ENCODE measurements at regions of chr15 and their contacts with region 1.

Region 1: DNA sequence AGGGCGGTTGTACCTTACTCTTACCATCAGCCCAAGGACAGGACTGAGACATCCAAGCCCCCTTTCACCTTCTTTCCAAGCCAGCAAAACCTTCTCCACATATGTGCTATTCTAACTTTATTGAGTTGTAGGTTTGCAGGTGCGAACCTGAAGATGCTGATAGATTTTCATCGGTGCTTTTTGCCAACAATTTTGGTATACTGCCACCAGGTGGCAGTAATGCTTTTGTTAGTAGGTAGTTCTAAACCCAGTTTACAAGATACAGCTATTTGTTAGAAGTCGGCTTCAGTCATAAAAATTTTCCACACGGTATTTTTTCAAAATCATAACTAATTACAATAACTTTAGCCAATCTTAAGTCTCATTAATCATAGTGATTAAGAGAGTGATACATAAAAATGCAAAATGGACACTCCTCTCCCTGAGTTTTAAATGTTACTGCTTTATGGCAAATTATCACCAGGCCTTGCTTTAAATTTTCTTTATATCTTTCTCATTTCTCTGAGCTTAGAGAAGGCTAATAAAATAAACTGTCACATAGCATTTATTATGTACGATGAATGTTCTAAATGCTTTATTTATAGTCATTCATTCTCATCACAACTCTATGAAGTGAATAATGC is 636 bp downstream of the TBC1D21 start:
- DNase-seq: peak; percentile 56
- H3K4me3 Mint-ChIP-seq: no peak overlapping the region
- H3K27ac Mint-ChIP-seq: no peak overlapping the region
- H3K4me1 Mint-ChIP-seq: no peaks in the 10 kb centered on the region
- H3K27me3 Mint-ChIP-seq: peaks cover 57% of the 10 kb centered on the region

Region 2: GRCh38 chr15:73891328-73892315 is 17.6 kb after region 1 on chr15:
- CTCF ChIA-PET with region 1: interaction called, 14 read pairs
- DNase-seq: no peak
- H3K4me3 Mint-ChIP-seq: no peak overlapping the region
- H3K27ac Mint-ChIP-seq: no peak overlapping the region
- H3K4me1 Mint-ChIP-seq: no peaks in the 10 kb centered on the region
- H3K27me3 Mint-ChIP-seq: peaks cover 47% of the 10 kb centered on the region

Region 3: DNA sequence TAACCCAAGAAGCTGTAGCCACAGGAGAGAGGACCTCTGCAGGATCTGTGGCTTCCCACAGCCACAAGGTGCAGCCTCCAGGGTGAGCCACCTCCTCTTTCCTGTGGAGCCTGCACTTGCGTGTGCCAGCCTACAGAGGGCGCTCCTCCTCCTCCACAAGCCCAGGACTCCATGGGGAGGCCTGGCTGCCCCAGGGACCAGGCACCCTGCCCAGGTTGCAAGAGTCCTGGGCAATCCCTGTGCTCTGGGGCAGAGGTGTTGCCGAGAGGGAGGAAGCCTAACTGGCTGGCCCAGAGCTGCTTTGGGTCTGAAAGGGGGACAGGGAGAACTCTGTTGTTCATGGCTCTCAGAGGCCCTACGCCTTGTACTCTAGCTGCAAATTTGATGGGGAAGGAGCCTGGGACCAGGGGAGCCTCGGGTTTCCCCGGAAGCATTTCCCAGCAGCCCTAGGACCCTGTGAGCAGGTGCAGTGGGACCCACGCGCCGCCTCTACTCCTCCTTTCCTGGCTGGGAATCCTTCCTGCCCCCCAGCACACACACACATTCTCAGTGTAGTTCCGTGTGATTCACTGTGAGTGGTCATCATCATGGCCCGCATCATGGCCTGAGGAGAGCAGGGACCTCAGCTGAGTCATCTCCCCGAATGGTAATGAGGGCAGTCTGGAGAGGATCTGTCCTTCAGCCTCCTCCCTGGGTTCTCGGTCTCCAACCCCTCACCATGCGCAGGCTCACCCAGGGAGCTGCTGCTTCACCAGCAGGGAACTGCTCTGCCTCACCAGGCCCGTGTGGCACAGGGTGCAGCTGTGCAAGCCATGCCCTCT is 23.7 kb after region 1 on chr15:
- CTCF ChIA-PET with region 1: interaction called, 14 read pairs
- DNase-seq: peak; percentile 77
- H3K4me3 Mint-ChIP-seq: no peak overlapping the region
- H3K27ac Mint-ChIP-seq: no peak overlapping the region
- H3K4me1 Mint-ChIP-seq: peaks cover 4% of the 10 kb centered on the region
- H3K27me3 Mint-ChIP-seq: peaks cover 20% of the 10 kb centered on the region

Region 4: GRCh38 chr15:73908030-73908821 is 34.2 kb after region 1 on chr15:
- CTCF ChIA-PET with region 1: interaction called, 62 read pairs
- DNase-seq: peak; percentile 86
- H3K4me3 Mint-ChIP-seq: no peak overlapping the region
- H3K27ac Mint-ChIP-seq: no peak overlapping the region
- H3K4me1 Mint-ChIP-seq: peaks cover 14% of the 10 kb centered on the region
- H3K27me3 Mint-ChIP-seq: peaks cover 7% of the 10 kb centered on the region

Region 5: DNA sequence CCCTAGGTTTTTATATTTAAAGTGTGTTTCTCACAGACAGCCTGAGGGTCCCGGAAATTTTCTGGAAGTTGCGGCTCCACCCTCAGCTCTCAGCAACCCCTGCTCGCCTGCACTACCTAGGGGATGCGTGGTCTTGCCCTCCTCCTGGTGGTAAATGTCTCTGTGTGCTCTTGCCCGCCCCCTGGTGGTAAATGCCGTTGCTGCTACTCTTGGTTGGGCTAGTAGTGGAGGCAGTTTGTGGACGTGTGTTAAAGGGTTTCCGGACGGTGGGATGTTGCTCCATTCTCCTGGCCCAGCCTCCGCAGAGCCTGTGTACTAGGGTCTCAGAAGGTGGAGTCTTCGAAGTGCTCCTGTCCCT is 90.7 kb after region 1 on chr15:
- CTCF ChIA-PET with region 1: interaction called, 18 read pairs
- DNase-seq: peak; percentile 92
- H3K4me3 Mint-ChIP-seq: peak overlapping the region; percentile 35
- H3K27ac Mint-ChIP-seq: peak overlapping the region; percentile 74
- H3K4me1 Mint-ChIP-seq: peaks cover 44% of the 10 kb centered on the region
- H3K27me3 Mint-ChIP-seq: peaks cover 5% of the 10 kb centered on the region

Region 6: GRCh38 chr15:73994419-73994883 is 120.5 kb after region 1 on chr15 and contains the start of gene PML:
- CTCF ChIA-PET with region 1: no interaction called
- DNase-seq: peak; percentile 98
- H3K4me3 Mint-ChIP-seq: peak within 1 kb of the TSS; percentile 85
- H3K27ac Mint-ChIP-seq: peak within 1 kb of the TSS; percentile 89
- H3K4me1 Mint-ChIP-seq: peaks cover 72% of the 10 kb centered on the region
- H3K27me3 Mint-ChIP-seq: no peaks in the 10 kb centered on the region

Measured in activated naive CD4-positive, alpha-beta T cell treated with anti-CD3 and anti-CD28 coated beads, Interleukin-2, amount 10 ng/mL, durations not matched to agents 7 days and 5 days (primary cell).